Activated CD8-positive, alpha-beta T cell treated with anti-CD3 and anti-CD28 coated beads for 36 hours (primary cell): ENCODE measurements at regions of chr17 and their contacts with region 1.

Region 1: DNA sequence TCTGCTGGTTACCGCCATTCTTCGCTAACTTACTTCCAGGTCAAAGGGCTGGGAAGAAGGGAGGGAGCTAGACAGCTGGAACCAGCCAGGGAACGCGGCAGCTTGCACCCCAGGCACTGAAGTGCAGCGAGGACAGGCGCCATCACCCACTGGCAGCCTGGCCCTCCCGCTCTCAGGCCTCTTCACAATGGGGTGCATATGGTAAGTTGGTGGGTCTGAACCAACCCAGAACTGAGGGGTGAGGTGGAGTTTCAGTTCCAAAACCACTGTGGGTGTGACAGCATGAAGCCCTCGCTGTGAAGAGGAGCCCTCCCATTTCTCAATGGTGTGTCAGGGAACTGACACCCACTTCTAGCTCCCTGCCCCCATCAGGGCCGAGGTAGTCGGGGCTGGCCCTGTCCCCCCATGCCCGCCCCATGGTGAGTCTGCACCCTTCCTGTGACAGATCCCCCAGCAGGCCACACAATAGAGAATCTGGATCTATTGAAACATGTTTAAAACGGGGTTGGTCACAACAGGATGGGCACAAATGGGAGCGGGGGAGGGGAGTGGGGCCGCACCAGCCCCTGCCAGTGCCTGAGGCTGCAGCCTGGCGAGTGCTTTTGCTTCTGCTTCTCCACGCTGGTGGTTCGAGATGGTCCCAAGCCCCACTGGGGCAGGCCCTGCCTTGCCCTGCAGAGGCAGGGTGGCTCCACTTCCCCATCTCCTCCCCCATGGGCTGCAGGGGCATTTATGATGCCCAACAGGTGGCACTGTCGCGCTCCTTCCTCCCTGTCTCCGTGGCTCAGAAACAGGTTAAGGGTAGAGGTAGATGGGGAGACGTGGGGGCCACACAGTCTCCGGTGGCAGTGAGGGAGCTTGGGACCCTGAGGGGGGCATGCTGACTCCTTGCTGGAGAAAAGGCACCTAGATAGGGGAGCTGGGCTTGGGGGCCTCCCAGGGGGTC is 2.3 kb downstream of the LIMD2 start:
- DNase-seq: peak; percentile 91
- ATAC-seq: peak; percentile 55
- H3K4me3 Mint-ChIP-seq: peak overlapping the region; percentile 83
- H3K27ac Mint-ChIP-seq: peak overlapping the region; percentile 94
- H3K4me1 Mint-ChIP-seq: peaks cover 53% of the 10 kb centered on the region
- H3K27me3 Mint-ChIP-seq: no peaks in the 10 kb centered on the region
- CTCF ChIP-seq: peak; percentile 75

Region 2: DNA sequence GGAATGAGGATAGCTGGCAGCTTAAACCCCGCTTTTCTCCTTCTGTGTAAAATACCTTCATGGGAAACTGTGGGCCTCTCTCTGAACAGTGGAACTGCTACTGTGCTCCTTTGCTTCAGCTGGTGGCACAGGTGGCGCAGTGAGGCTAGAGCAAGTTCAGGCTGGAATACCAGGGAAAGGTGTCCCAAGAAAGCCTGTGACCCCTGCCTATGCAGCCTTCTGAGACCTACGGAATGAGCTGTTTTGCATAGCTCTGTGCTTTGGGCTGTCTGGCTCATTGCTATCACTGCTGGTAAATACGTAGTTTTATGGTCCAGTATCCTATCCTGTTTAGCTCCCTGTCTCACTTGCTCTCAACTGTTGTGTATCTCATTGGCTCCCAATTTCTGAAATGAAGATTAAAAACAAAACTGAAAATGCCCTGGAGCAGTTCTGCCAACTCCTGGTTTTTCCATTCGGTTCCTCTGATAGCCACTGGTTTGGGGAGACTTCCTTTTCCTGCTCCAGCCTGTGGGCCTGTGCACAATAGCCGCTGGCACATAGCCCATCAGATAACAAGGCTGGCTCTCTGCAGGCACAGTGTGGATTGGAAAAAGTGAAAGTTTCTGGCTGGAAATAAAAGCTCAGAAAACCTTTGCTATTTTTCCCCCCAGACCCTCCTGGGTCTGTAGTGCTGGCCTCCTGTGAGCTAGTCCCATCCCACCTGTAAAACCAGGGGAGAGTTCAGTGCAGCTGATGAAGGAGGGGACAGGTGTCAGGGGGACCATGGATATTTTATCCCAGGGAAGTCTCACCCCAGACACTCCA is 21.8 kb before region 1 on chr17:
- CTCF ChIA-PET with region 1: interaction called, 4 read pairs
- POLR2A ChIA-PET with region 1: interaction called, 28 read pairs
- intact Hi-C with region 1: no loop called
- DNase-seq: no peak
- ATAC-seq: no peak
- H3K4me3 Mint-ChIP-seq: no peak overlapping the region
- H3K27ac Mint-ChIP-seq: no peak overlapping the region
- H3K4me1 Mint-ChIP-seq: peaks cover 5% of the 10 kb centered on the region
- H3K27me3 Mint-ChIP-seq: no peaks in the 10 kb centered on the region
- CTCF ChIP-seq: no peak

Region 3: DNA sequence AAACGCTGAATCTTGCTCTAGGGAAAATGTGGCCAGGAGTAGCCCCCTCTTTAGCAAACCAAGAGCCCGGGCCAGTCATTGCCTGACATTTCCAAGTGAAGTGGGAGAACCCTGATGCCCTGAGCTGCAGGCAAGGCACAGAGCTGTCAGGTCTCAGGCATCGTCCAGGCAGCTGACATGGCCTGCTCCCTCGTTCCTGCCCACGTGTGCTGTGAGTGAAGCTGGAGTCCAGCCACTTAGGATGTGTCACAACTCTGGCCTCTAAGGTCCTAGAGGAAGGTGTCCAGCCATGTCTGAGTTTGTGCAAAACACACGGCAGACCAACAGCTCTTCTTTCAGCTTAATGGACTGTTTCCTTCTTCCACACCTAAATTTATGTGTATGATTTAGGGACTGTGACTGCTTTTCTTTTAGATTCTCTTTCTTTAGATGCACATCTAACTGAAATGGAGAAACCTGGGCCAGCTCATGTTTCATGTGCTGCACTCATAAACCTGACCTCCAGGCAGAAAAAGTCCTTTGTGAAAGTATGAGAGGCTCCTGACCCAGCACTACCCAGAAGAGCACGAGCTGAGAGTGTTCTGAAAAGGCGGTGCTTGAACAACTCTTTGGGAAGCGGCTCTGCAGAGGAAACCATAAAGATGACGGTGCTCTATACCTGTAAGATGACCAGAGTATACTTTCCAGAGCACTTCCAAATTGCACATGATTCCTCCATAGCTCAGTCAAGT is 17.1 kb after region 1 on chr17:
- CTCF ChIA-PET with region 1: interaction called, 28 read pairs
- POLR2A ChIA-PET with region 1: interaction called, 15 read pairs
- intact Hi-C with region 1: no loop called
- DNase-seq: no peak
- ATAC-seq: no peak
- H3K4me3 Mint-ChIP-seq: no peak overlapping the region
- H3K27ac Mint-ChIP-seq: no peak overlapping the region
- H3K4me1 Mint-ChIP-seq: peaks cover 9% of the 10 kb centered on the region
- H3K27me3 Mint-ChIP-seq: no peaks in the 10 kb centered on the region
- CTCF ChIP-seq: no peak

Region 4: GRCh38 chr17:63751806-63752205 is 54.2 kb after region 1 on chr17:
- CTCF ChIA-PET with region 1: interaction called, 3 read pairs
- POLR2A ChIA-PET with region 1: interaction called, 14 read pairs
- intact Hi-C with region 1: no loop called
- DNase-seq: peak; percentile 43
- ATAC-seq: peak; percentile 73
- H3K4me3 Mint-ChIP-seq: peak overlapping the region; percentile 57
- H3K27ac Mint-ChIP-seq: peak overlapping the region; percentile 86
- H3K4me1 Mint-ChIP-seq: peaks cover 19% of the 10 kb centered on the region
- H3K27me3 Mint-ChIP-seq: no peaks in the 10 kb centered on the region
- CTCF ChIP-seq: no peak

Region 5: GRCh38 chr17:63834431-63835166 is 137.0 kb after region 1 on chr17:
- CTCF ChIA-PET with region 1: interaction called, 5 read pairs
- POLR2A ChIA-PET with region 1: interaction called, 10 read pairs
- intact Hi-C with region 1: loop called (anchors 5 kb)
- DNase-seq: peak; percentile 61
- ATAC-seq: peak; percentile 83
- H3K4me3 Mint-ChIP-seq: no peak overlapping the region
- H3K27ac Mint-ChIP-seq: peak overlapping the region; percentile 69
- H3K4me1 Mint-ChIP-seq: peaks cover 47% of the 10 kb centered on the region
- H3K27me3 Mint-ChIP-seq: no peaks in the 10 kb centered on the region
- CTCF ChIP-seq: peak; percentile 58